ENCODE measurements at regions of chr2 and their contacts with region 1.

Region 1: DNA sequence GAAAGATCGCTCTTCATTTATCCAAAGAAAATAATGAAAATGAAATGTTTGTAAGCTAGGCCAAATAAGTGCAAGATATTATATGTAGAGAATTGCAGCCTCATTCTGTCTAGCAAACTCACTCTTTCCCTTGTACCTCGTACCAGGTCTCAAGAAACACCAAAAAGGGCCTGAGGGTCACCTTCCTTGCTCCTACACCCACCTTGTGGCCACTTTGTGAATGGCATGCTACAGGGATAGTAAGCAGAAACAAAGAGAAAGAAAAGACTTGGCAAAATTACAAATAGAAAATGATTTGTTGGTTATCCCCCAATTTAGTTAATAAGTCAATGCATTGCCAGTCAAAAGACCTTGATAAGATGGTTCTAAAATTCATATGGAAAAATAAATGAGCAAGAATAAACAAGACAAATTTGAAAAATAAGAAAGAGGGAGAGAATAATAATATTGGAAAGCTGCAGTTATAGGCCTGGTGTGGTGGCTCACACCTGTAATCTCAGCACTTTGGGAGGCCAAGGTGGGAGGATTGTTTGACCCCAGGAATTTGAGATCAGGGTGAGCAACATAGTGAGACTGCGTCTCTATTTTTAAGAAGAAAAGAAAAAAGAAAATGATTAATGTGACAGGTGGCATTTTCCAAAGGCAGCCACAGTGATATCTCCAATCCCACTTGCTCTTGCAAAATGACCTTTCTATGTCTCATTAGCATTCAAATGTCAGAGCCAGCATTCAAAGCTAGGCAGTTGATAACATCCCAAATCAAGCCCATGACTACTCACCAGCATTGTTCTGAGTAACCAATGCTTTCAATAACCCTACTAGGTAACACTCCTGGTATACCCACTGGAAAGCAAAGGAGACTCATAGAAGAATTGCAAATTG is 38.8 kb upstream of the BMP10 start:
- DNase-seq: peak; percentile 59
- ATAC-seq: peak; percentile 72; the same call in 1 of the 2 replicates
- H3K4me3 ChIP-seq: no peak overlapping the region
- H3K27ac ChIP-seq: no peak overlapping the region
- H3K4me1 ChIP-seq: no peaks in the 10 kb centered on the region
- H3K27me3 ChIP-seq: no peaks in the 10 kb centered on the region
- CTCF ChIP-seq: peak; percentile 93

Region 2: DNA sequence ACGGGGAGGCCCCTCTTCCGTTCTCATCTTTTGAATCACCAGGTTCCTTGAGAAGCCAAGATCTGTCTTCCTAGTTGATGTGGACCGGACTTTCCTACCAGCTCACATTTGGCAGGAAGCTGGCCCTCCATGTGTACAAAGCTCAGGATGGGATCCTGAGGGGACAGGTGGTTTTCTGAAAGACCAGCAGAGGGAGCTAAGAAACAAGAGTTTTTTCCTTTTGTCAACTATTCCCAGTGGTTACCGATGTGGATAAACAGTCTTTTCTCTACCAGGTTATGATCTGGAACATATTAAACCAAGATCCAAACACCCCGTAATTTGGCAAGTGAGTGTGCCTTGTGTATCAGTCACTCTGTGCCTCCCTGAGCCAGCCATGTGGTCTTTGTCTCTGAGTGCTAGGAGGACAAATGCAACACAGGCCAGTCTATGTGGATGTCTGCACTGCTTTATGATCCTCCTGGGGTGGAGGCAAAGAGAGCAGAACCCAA is 200.6 kb before region 1 on chr2:
- CTCF ChIA-PET with region 1: interaction called, 3 read pairs
- POLR2A ChIA-PET with region 1: no interaction called
- in situ Hi-C with region 1: no loop called
- intact Hi-C with region 1: loop called (anchors 5 kb)
- DNase-seq: peak; percentile 48
- ATAC-seq: peak; percentile 96
- H3K4me3 ChIP-seq: no peak overlapping the region
- H3K27ac ChIP-seq: no peak overlapping the region
- H3K4me1 ChIP-seq: no peaks in the 10 kb centered on the region
- H3K27me3 ChIP-seq: peaks cover 6% of the 10 kb centered on the region; the same call in 1 of the 2 replicates
- CTCF ChIP-seq: peak; percentile 84

Region 3: GRCh38 chr2:68751397-68752339 is 158.4 kb before region 1 on chr2:
- CTCF ChIA-PET with region 1: no interaction called
- POLR2A ChIA-PET with region 1: no interaction called
- in situ Hi-C with region 1: no loop called
- intact Hi-C with region 1: loop called (anchors 5 kb)
- DNase-seq: peak; percentile 74
- ATAC-seq: peak; percentile 99
- H3K4me3 ChIP-seq: no peak overlapping the region
- H3K27ac ChIP-seq: no peak overlapping the region
- H3K4me1 ChIP-seq: no peaks in the 10 kb centered on the region
- H3K27me3 ChIP-seq: no peaks in the 10 kb centered on the region
- CTCF ChIP-seq: peak; percentile 93

Measured in Panc1 (cell line).